Motor neuron (in vitro differentiated cells): ENCODE measurements at regions of chr10 and their contacts with region 1.

Region 1: DNA sequence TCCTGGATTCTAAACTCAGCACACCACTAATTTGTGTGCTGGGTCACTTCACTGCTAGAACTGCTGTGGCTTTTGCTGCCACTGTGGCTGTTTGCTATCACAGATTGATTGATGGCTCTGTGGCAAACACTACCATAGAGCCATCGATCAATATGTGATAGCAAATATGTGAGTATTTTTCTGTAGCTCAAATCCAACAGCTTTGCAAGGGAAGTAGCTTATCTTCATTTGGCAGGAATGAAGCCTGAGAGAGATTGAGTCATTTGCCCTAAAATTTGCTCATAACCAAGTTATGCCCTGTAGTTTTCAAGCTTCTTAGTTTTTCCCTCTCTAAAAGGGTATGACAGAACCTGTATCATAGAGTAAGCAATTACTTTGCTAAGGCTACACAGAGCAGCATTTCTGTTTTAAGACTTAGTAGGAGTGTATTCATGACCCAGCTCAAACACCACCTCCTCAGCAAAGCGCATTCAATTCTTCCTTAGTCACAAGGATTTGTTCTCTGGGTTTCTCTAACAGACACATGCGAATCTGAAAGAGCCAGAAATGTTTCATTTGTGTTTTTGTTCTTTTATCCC is 43.1 kb downstream of the MINPP1 start:
- ATAC-seq: no peak
- H3K4me3 ChIP-seq: no peak overlapping the region
- H3K27ac ChIP-seq: no peak overlapping the region
- H3K4me1 ChIP-seq: peaks cover 0 to 5% of the 10 kb centered on the region in 2 donors

Region 2: GRCh38 chr10:87635610-87636312 is 87.9 kb after region 1 on chr10:
- in situ Hi-C with region 1: loop called in 1 of 9 experiments (anchors 25 kb)
- ATAC-seq: peak in 2 of 8 experiments; percentile 34 to 67
- H3K4me3 ChIP-seq: no peak overlapping the region
- H3K27ac ChIP-seq: no peak overlapping the region
- H3K4me1 ChIP-seq: no peaks in the 10 kb centered on the region

Region 3: GRCh38 chr10:87659571-87660483 is 112.0 kb after region 1 on chr10 and contains the start of gene PAPSS2:
- in situ Hi-C with region 1: loop called in 1 of 9 experiments (anchors 25 kb)
- ATAC-seq: peak; percentile 74 to 83 (median 79)
- H3K4me3 ChIP-seq: peak within 1 kb of the TSS; percentile 52 to 90 (median 63)
- H3K27ac ChIP-seq: no peak within 1 kb of the TSS
- H3K4me1 ChIP-seq: peaks cover 0 to 2% of the 10 kb centered on the region in 2 donors
- total RNA-seq, gene PAPSS2: 0.75 to 60.6 (median 7.3) TPM

Region 4: GRCh38 chr10:87734987-87735827 is 187.4 kb after region 1 on chr10:
- in situ Hi-C with region 1: loop called in 4 of 9 experiments (anchors 25 kb)
- ATAC-seq: peak; percentile 32 to 90 (median 69)
- H3K4me3 ChIP-seq: no peak overlapping the region
- H3K27ac ChIP-seq: no peak overlapping the region
- H3K4me1 ChIP-seq: no peaks in the 10 kb centered on the region

Region 5: GRCh38 chr10:88254091-88254490 is 706.3 kb after region 1 on chr10:
- in situ Hi-C with region 1: no loop called
- ATAC-seq: peak in 5 of 8 experiments; percentile 39 to 98 (median 58)
- H3K4me3 ChIP-seq: no peak overlapping the region
- H3K27ac ChIP-seq: no peak overlapping the region
- H3K4me1 ChIP-seq: no peaks in the 10 kb centered on the region